ENCODE measurements at regions of chr17 and their contacts with region 1.

Region 1: GRCh38 chr17:10652984-10653659 is 4.0 kb downstream of the MYH3 start:
- DNase-seq: no peak
- H3K4me3 ChIP-seq: no peak overlapping the region
- H3K27ac ChIP-seq: no peak overlapping the region
- H3K4me1 ChIP-seq: no peaks in the 10 kb centered on the region
- H3K27me3 ChIP-seq: no peaks in the 10 kb centered on the region
- CTCF ChIP-seq: no peak
- EP300 ChIP-seq: no peak
- POLR2A ChIP-seq: no peak

Region 2: DNA sequence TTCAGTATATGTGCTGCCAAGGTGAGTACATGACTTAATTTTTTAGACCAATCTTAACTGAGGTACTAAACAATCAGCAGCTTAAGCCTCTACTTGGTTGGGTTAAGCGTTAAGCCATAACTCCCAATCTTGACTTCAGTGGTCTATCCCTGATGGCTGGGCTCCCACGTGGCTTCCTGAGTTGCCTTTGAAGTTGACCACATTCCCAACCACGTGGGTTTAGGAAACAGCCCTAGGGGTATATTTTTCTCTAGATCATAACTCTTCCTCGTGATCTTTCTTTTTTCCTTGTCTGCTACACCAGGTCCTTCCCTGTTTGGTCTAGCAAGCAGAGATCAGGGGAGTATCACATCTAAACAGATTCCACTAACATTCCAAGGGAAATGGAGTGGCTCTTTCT is 204.9 kb after region 1 on chr17:
- in situ Hi-C with region 1: loop called in 1 of 4 experiments (anchors 10 kb)
- intact Hi-C with region 1: no loop called
- DNase-seq: no peak
- H3K4me3 ChIP-seq: no peak overlapping the region
- H3K27ac ChIP-seq: no peak overlapping the region
- H3K4me1 ChIP-seq: no peaks in the 10 kb centered on the region
- H3K27me3 ChIP-seq: no peaks in the 10 kb centered on the region
- CTCF ChIP-seq: no peak
- EP300 ChIP-seq: no peak
- POLR2A ChIP-seq: no peak